Activated naive CD4-positive, alpha-beta T cell treated with anti-CD3 and anti-CD28 coated beads for 36 hours (primary cell): ENCODE measurements at regions of chr9 and their contacts with region 1.

Region 1: GRCh38 chr9:75185585-75186170 is 97.4 kb downstream of the OSTF1 start:
- DNase-seq: peak; percentile 72
- H3K4me3 Mint-ChIP-seq: no peak overlapping the region
- H3K27ac Mint-ChIP-seq: no peak overlapping the region
- H3K4me1 Mint-ChIP-seq: peaks cover 16% of the 10 kb centered on the region
- H3K27me3 Mint-ChIP-seq: no peaks in the 10 kb centered on the region

Region 2: GRCh38 chr9:74773886-74774479 is 411.7 kb before region 1 on chr9:
- CTCF ChIA-PET with region 1: interaction called, 3 read pairs
- intact Hi-C with region 1: loop called (anchors 2 kb)
- DNase-seq: peak; percentile 85
- H3K4me3 Mint-ChIP-seq: no peak overlapping the region
- H3K27ac Mint-ChIP-seq: no peak overlapping the region
- H3K4me1 Mint-ChIP-seq: peaks cover 14% of the 10 kb centered on the region
- H3K27me3 Mint-ChIP-seq: peaks cover 14% of the 10 kb centered on the region

Region 3: GRCh38 chr9:75039009-75039408 is 146.7 kb before region 1 on chr9:
- CTCF ChIA-PET with region 1: no interaction called
- intact Hi-C with region 1: no loop called
- DNase-seq: no peak
- H3K4me3 Mint-ChIP-seq: no peak overlapping the region
- H3K27ac Mint-ChIP-seq: no peak overlapping the region
- H3K4me1 Mint-ChIP-seq: no peaks in the 10 kb centered on the region
- H3K27me3 Mint-ChIP-seq: no peaks in the 10 kb centered on the region

Region 4: DNA sequence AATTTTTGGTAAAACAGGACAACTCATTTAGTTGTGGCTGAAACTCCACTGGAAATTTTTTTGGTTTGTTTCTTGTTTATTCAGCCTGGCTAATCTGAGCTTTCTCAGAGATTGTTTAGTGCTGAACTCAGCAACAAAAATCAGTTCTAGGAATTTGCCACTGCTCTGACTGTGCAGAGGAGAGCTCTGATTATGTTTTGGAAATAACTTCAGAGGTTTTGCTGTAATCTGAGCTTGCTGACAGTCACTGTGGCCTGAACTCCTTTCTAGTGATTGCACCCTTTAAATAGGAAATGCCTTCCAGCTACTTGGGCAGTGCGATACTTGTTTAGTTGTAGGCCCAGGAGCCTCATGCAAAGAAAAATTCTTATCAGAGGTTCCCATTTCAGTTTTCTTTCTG is 37.1 kb before region 1 on chr9:
- CTCF ChIA-PET with region 1: interaction called, 7 read pairs
- intact Hi-C with region 1: loop called (anchors 2 kb)
- DNase-seq: peak; percentile 32
- H3K4me3 Mint-ChIP-seq: no peak overlapping the region
- H3K27ac Mint-ChIP-seq: peak overlapping the region; percentile 83
- H3K4me1 Mint-ChIP-seq: peaks cover 64% of the 10 kb centered on the region
- H3K27me3 Mint-ChIP-seq: no peaks in the 10 kb centered on the region

Region 5: GRCh38 chr9:75200892-75201470 is 15.3 kb after region 1 on chr9:
- CTCF ChIA-PET with region 1: interaction called, 21 read pairs
- intact Hi-C with region 1: no loop called
- DNase-seq: no peak
- H3K4me3 Mint-ChIP-seq: no peak overlapping the region
- H3K27ac Mint-ChIP-seq: no peak overlapping the region
- H3K4me1 Mint-ChIP-seq: peaks cover 4% of the 10 kb centered on the region
- H3K27me3 Mint-ChIP-seq: no peaks in the 10 kb centered on the region

Region 6: GRCh38 chr9:75866273-75866871 is 680.7 kb after region 1 on chr9:
- CTCF ChIA-PET with region 1: no interaction called
- intact Hi-C with region 1: loop called (anchors 5 kb)
- DNase-seq: peak; percentile 75
- H3K4me3 Mint-ChIP-seq: no peak overlapping the region
- H3K27ac Mint-ChIP-seq: no peak overlapping the region
- H3K4me1 Mint-ChIP-seq: peaks cover 15% of the 10 kb centered on the region
- H3K27me3 Mint-ChIP-seq: no peaks in the 10 kb centered on the region